A673 (cell line): ENCODE measurements at regions of chr2 and their contacts with region 1.

Region 1: GRCh38 chr2:62467475-62468321 is 38.3 kb downstream of the TMEM17 start:
- DNase-seq: no peak
- H3K4me3 ChIP-seq: no peak overlapping the region
- H3K27ac ChIP-seq: no peak overlapping the region
- H3K4me1 ChIP-seq: no peaks in the 10 kb centered on the region
- H3K27me3 ChIP-seq: no peaks in the 10 kb centered on the region
- CTCF ChIP-seq: no peak

Region 2: DNA sequence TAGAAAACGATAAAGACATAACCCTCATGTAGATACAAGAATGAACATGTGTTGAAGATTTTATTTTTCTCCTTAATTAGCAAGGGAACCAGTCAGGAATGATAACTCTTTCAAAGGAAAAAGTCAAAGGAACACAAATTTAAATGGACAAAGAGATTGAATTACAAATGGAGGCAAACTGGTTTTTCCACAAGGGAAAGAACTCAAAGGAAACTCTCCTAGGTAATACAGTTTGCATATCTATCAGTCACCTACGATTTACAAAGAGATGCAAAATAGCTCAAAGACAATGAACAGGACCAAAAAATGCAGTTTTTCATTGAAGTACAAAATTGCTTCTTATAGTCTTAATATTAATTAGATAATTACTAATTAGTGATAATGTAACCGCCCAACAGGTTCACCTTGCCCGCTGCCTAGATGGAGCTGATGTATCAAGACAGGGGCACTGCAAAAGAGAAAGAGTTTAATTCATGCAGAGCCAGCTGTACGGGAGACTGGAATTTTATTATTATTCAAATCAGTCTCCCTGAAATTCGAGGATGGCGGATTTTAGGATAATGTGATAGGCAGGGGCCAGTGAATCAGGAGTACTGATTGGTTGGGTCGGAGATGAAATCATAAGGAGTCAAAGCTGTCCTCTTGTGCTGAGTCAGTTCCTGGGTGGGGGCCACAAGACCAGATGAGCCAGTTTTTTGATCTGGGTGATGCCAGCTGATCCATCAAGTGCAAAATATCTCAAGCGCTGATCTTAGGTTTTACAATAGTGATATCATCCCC is 112.7 kb before region 1 on chr2:
- CTCF ChIA-PET with region 1: no interaction called
- POLR2A ChIA-PET with region 1: no interaction called
- intact Hi-C with region 1: no loop called
- DNase-seq: peak; percentile 9
- H3K4me3 ChIP-seq: no peak overlapping the region
- H3K27ac ChIP-seq: no peak overlapping the region
- H3K4me1 ChIP-seq: no peaks in the 10 kb centered on the region
- H3K27me3 ChIP-seq: no peaks in the 10 kb centered on the region
- CTCF ChIP-seq: no peak

Region 3: GRCh38 chr2:63023444-63023843 is 555.7 kb after region 1 on chr2:
- CTCF ChIA-PET with region 1: no interaction called
- POLR2A ChIA-PET with region 1: no interaction called
- intact Hi-C with region 1: loop called (anchors 10 kb)
- DNase-seq: peak; percentile 84
- H3K4me3 ChIP-seq: no peak overlapping the region
- H3K27ac ChIP-seq: no peak overlapping the region
- H3K4me1 ChIP-seq: no peaks in the 10 kb centered on the region
- H3K27me3 ChIP-seq: no peaks in the 10 kb centered on the region
- CTCF ChIP-seq: peak; percentile 75